GM18951 (cell line): ENCODE measurements at regions of chr9 and their contacts with region 1.

Region 1: GRCh38 chr9:105708405-105708804 is 14.1 kb downstream of the TMEM38B start:
- POLR2A ChIP-seq: no peak

Region 2: DNA sequence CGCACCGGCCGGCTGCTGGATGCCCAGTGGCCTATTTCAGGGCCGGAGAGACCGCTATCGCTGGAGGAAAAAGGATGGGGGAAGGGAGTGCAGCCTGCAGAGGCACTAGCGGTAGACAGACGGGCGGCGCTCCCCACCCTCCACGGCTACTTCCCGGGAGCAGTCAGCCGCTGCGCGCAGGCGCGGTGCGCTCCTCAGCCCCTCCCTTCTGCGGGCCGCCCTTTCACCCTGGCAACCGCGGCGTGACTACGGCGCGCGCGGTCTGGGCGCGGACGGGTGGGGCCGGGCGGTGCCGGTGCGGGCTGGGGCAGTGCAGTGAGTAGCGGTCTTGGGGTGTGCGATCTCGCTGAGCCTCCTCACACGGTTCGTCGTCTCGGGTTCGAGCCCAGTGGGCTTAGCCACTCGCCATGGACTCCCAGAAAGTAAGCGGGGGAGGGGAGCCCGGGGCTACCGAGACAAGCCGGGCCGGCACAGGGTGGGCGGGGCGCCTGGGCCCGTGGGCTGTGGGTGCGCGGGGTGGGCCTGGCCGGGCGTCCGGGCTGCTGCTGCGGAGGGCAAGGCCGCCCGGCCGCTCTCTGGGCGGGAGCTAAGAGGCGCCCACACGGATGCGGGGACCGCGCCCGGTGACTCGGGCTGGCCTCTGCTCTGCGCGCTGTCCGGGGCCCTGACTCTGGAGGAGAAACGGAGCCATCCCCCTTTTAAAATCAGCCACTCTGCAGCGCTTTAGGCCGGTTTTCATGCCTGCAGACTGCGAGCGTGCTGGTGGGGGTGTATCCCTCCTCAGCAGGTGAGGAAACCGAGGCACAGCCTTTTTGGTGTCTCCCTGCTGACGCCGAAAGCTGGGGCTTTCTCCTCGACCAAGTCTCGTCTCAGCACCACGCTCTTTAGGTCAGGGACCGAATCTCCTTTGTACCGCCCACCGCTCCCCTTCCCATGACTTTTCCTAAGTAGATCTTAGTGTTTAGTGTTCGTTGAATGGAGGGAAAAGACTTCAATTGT is 260.3 kb before region 1 on chr9 and contains the start of gene FSD1L:
- in situ Hi-C with region 1: loop called (anchors 25 kb)
- POLR2A ChIP-seq: peak; percentile 71

Region 3: DNA sequence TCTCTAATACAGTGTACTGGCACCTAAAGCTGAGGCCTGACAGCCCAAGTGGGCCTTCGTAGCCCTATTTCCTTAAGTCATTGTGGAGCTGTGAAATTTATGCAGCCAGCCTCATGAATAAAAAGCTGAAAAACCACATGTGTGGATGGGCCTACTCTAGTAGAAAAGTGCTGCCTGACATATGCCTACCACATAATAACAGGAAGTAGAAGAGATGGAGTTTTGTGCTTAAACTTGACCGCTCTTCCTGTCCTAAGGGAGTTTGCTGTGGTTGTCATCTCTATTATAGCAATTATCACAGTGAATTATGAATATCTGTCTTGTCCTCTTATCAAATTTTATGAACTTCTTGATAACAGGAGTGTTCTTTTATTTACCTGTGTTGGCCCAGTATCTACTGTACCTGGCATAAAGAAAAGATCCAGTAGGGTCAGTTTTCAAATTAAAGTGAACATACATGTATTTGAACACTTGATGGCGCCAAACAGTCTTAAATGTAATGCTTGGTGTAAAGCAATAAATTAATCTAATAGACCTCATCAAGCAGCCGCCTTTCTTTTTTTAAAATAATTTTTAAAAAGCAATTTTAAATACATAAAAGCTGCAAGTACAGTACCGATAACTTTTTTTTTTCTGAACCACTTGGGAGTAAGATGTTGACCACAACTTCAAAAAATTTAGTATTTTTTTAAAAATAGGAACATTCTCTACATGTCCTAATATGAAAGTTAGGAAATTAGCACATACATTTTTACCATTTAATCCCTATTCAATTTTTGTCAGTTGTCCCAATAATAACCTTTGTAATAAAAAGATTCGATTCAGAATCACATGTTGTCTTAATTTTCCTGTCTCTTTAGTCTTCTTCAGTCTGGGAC is 99.4 kb before region 1 on chr9:
- in situ Hi-C with region 1: loop called (anchors 10 kb)
- POLR2A ChIP-seq: no peak

Region 4: DNA sequence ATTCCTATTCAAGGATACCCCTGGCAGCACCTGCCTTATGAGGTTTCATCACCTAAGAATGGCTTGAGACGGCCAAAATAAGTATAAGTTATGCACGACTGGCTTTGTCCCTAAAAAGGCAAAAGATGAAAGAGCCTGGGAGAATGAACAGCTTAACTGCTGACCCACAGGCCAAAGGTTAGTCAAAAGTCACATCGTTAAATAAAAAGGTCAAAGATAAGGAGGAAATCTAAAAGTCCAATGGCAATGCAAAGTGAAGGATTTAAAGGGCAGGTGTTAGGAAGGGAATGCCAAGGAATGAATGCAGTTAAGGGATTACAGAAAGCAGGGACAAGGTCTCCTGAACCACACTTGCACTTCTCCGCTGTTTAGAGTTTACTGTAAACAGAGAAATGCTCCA is 40.5 kb before region 1 on chr9:
- in situ Hi-C with region 1: loop called (anchors 5 kb)
- POLR2A ChIP-seq: no peak